ENCODE measurements at regions of chr18 and their contacts with region 1.

Region 1: GRCh38 chr18:45212181-45213039 is 402.9 kb upstream of the SLC14A2 start:
- DNase-seq: peak; percentile 59
- CTCF ChIP-seq: peak; percentile 95

Region 2: GRCh38 chr18:44679056-44679905 is 533.1 kb before region 1 on chr18:
- CTCF ChIA-PET with region 1: interaction called, 20 read pairs
- POLR2A ChIA-PET with region 1: no interaction called
- DNase-seq: peak; percentile 88
- CTCF ChIP-seq: peak; percentile 83

Region 3: GRCh38 chr18:44904768-44905167 is 307.6 kb before region 1 on chr18:
- CTCF ChIA-PET with region 1: interaction called, 20 read pairs
- POLR2A ChIA-PET with region 1: no interaction called
- DNase-seq: no peak
- CTCF ChIP-seq: no peak

Region 4: GRCh38 chr18:44927127-44927849 is 285.1 kb before region 1 on chr18:
- CTCF ChIA-PET with region 1: interaction called, 10 read pairs
- POLR2A ChIA-PET with region 1: no interaction called
- DNase-seq: no peak
- CTCF ChIP-seq: no peak

Region 5: DNA sequence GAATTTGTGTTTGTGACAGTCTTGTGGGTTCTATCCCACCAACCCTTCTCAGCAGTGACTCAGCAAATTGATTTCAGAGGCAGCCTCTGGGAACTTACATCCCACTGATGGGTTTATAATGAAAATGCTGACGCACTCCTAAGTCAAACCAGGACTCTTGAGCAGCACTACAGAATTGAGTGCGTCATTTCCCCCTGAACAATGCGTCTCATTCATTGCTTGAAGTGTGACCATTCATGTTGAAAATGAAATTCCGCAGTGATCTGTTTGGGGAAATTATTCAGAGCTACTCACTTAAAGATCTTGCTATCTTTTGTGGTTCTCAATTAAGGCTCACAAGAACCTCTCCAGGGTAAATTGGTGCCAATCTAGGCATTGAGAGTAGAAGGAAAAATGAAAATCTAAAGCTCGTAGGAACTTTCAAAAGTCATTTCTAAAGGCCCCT is 14.9 kb before region 1 on chr18:
- CTCF ChIA-PET with region 1: interaction called, 50 read pairs
- POLR2A ChIA-PET with region 1: no interaction called
- DNase-seq: peak; percentile 39
- CTCF ChIP-seq: no peak

Region 6: DNA sequence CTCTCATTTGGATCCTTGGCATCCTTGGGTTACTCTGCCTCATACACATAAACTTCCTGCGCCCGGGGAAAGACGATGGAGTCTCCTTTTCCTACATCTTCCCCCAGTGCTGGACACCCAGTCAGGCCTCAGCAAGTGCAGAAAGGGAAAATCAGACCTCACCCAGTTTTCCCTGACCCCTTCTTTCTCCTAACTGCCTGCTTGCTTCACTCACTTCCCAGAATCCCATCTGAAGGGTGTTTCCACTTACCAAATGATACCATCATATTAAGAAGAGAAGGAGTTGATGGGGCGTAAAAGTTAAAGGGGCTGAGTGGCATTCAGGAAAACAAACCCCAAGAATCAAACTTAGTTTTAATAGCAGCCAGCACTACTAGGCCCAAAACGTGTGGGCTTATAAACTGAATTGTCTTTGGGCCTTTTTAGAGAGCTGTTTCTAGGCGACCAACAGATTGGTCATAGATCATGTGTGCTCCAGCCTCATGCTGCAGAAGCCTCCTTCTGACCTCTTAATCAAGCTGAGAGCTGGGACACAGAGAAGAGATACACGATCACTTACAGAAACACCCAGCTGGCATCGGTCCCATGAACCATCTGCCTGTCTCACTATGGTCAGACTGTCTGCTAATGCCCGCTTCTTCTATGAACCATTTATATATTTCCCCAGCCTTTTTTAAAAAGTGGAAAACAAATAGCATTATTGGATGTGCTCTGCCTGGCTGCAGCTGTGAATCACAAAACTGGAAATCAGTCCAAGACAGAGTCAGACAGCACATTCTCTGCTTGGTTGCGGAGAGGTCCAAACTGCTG is 237.2 kb after region 1 on chr18:
- CTCF ChIA-PET with region 1: no interaction called
- POLR2A ChIA-PET with region 1: no interaction called
- DNase-seq: no peak
- CTCF ChIP-seq: no peak

Measured in GM10248 (cell line).